ENCODE measurements at regions of chr6 and their contacts with region 1.

Region 1: DNA sequence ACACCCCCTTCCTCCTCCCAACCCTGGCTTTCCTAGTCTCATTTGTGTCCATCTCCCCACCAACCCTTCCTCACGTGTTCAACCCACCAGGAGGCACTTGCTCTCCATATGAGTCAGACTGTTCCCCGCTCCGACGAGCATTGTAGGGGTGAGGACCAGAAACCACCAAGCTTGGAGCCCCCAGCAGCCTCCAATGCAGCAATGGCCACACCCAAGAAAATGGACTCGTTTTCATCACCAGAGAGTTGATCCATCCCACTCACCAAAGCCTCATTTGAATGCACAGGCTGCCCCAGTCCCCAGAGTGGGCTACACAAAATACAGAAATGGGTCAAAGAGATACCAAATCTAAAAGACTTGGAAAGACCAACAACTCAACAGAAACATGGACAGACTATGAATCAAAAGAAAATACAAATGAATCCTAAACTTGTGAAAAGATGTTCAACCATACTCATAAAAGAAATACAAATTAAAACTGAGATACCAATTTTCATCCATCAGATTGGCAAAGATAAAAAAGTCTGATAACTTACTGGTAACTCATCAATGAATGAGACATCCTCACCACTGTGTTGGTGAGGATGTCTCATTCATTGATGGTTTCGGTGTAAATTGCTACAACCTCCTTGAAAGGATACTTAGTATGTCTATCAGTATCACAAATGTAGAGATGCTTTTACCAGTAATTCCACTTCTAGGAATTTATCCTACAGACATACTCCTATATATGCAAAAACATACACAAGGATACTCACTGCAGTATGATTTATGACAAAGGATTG is 68.1 kb downstream of the TRERF1 start:
- DNase-seq: peak; percentile 69
- ATAC-seq: peak; percentile 71
- H3K4me3 Mint-ChIP-seq: peak overlapping the region; percentile 42
- H3K27ac Mint-ChIP-seq: peak overlapping the region; percentile 90
- H3K4me1 Mint-ChIP-seq: peaks cover 96% of the 10 kb centered on the region
- H3K27me3 Mint-ChIP-seq: no peaks in the 10 kb centered on the region

Region 2: DNA sequence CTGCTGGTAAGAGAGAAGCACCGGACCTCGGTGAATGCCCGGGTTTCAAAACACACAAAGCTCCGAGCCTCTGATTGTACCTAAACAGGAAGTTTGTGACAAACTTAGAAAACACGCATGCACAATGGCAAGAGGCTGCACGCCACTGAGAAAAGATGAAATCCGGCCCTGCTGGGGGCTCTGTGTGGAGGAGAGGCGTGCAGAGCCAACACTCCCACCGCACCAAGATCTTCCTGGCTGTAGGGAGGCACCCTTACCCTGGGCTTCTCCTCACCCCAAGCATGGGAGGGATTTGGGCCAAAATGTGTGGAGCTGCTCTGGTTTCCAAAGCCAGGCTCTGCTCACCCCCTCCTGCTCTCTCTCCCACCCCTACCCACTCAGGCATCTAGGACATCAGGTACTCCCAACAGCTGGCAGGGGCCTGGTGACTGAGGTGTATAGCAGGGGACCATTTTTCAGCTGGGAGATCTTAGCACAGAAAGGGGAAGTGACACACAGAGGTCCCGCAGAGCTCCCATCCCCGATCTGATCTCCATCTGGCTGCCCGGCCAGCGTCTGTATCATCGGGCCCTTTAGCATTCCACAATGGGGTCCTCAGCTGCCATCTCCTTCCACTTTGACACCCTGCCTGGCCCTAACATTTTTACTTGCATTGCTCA is 16.1 kb before region 1 on chr6:
- CTCF ChIA-PET with region 1: interaction called, 17 read pairs
- DNase-seq: peak; percentile 71
- ATAC-seq: peak; percentile 54
- H3K4me3 Mint-ChIP-seq: peak overlapping the region; percentile 66
- H3K27ac Mint-ChIP-seq: peak overlapping the region; percentile 97
- H3K4me1 Mint-ChIP-seq: peaks cover 86% of the 10 kb centered on the region
- H3K27me3 Mint-ChIP-seq: no peaks in the 10 kb centered on the region

Measured in activated CD8-positive, alpha-beta memory T cell treated with anti-CD3 and anti-CD28 coated beads, Interleukin-2, amount 10 ng/mL, durations not matched to agents 7 days and 5 days (primary cell).